Esophagus muscularis mucosa (tissue), 4 donors: ENCODE measurements at regions of chr17 and their contacts with region 1.

Region 1: GRCh38 chr17:44775136-44775837 is 16.5 kb downstream of the ADAM11 start:
- DNase-seq: peak; percentile 98
- H3K4me3 ChIP-seq: peak overlapping the region; percentile 60 to 67 (median 63)
- H3K27ac ChIP-seq: peak overlapping the region; percentile 5 to 80 (median 70)
- H3K4me1 ChIP-seq: peaks cover 25 to 39% (median 36%) of the 10 kb centered on the region in 4 donors
- H3K27me3 ChIP-seq: peaks cover 0 to 35% (median 9%) of the 10 kb centered on the region in 4 donors
- CTCF ChIP-seq: peak in 1 of 3 experiments; percentile 21
- EP300 ChIP-seq: no peak
- POLR2A ChIP-seq: no peak

Region 2: DNA sequence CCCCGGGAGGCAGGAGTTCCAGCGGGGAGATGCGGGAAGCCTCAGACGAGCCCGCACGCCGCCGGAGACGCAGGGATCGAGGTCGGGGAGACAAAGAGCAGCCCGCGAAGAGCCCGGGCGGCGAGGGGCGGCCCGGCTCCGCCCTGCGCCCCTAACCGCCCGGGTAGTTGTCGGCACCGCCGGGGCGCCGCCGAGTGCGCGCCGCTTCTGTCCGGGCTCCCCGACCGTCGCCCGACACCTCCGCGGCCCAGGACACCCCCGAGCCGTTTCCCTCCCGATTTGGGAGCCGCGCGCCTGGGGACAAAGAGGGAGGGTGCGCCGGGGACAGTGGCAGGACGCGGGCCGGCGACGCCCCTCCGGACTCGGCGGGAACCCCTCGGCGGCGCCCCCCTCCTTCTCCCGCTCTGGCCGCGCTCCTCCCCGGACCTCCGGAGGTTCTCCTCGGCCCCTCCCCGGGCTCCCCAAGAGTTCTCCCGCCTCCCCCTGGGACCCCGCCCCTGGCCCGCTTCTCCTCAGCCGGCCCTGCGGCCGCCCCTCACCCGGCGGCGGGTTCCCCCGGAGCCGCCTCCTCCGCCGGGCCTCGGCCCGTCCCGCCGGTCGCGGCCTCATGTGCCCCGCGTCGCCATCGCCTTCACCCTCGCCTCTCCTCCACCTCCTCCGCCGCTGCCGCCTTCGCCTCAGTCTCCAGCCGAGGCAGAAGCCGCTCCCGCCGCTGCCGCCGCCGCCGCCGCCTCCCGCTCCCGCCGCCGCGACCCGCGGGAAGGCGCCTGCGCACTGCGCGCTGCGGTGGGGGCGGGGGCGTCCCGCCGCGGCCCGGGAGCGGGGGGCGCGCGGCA is 54.5 kb after region 1 on chr17 and contains the start of gene GJC1:
- intact Hi-C with region 1: loop called (anchors 5 kb)
- DNase-seq: no peak
- H3K4me3 ChIP-seq: peak within 1 kb of the TSS; percentile 81 to 86 (median 82)
- H3K27ac ChIP-seq: peak within 1 kb of the TSS; percentile 89 to 95 (median 94)
- H3K4me1 ChIP-seq: peaks cover 15 to 50% (median 41%) of the 10 kb centered on the region in 4 donors
- H3K27me3 ChIP-seq: peaks cover 0 to 51% (median 2%) of the 10 kb centered on the region in 4 donors
- CTCF ChIP-seq: no peak
- EP300 ChIP-seq: no peak
- POLR2A ChIP-seq: no peak
- total RNA-seq, gene GJC1: 26.5 to 61.9 (median 37.4) TPM

Region 3: DNA sequence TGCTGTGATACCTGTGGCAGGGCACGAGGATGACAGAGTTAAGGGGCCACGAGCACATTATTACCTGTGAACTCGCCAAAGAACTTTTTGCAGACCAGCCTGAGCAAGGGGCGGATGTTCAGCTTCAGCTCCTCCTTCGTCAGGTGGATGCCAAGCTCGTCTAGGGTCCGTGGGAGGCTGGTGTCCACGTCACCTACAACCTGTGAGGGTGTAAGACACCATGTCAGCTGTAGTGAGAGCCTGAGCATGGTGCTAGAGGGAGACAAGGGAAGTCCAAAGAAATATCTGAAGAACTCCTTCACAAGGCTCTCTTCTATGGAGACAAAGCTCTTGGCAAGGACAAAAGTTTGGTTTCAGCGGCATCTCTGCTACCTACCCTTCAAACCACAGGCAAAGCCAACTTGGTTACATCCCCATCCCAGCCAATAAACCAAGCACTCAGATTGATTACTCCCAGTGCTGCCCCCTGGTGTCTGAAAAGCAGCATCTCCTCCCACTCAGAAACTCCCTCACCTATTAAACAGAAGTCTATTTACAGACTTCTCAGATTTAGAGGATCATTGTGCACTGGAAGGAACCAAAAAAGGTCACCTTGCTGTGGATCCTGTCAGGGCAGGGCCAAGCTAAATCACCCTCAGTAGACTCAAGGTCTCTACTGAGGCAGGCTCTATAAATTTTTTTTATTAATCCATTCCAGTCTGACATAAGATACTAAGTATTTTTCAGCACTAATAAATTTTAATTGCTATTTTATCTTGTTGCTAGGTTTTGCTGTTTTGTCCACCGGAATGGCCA is 89.8 kb after region 1 on chr17:
- intact Hi-C with region 1: loop called (anchors 1 kb)
- DNase-seq: no peak
- H3K4me3 ChIP-seq: no peak overlapping the region
- H3K27ac ChIP-seq: peak overlapping the region in 2 of 4 donors; percentile 3 to 71
- H3K4me1 ChIP-seq: peaks cover 0 to 19% (median 9%) of the 10 kb centered on the region in 4 donors
- H3K27me3 ChIP-seq: no peaks in the 10 kb centered on the region
- CTCF ChIP-seq: peak; percentile 90 to 92 (median 91)
- EP300 ChIP-seq: no peak
- POLR2A ChIP-seq: no peak